Dorsolateral prefrontal cortex (tissue), 120 donors: ENCODE measurements at regions of chr1 and their contacts with region 1.

Region 1: GRCh38 chr1:48572646-48573261 is 100.8 kb upstream of the SPATA6 start:
- DNase-seq: peak; percentile 37 to 91 (median 82)
- H3K4me3 ChIP-seq: no peak overlapping the region
- H3K27ac ChIP-seq: no peak overlapping the region
- H3K27me3 ChIP-seq: no peaks in the 10 kb centered on the region
- CTCF ChIP-seq: peak; percentile 32 to 93 (median 84)

Region 2: GRCh38 chr1:48610628-48611542 is 38.1 kb after region 1 on chr1:
- intact Hi-C with region 1: no loop called
- DNase-seq: peak; percentile 4 to 64 (median 55)
- H3K4me3 ChIP-seq: peak overlapping the region in 4 of 59 donors; percentile 7 to 38 (median 17)
- H3K27ac ChIP-seq: peak overlapping the region in 56 of 59 donors; percentile 12 to 87 (median 70)
- H3K27me3 ChIP-seq: no peaks in the 10 kb centered on the region
- CTCF ChIP-seq: no peak

Region 3: GRCh38 chr1:48677306-48678287 is 104.8 kb after region 1 on chr1:
- intact Hi-C with region 1: loop called in 1 of 2 experiments (anchors 5 kb)
- DNase-seq: peak; percentile 34 to 78 (median 70)
- H3K4me3 ChIP-seq: peak overlapping the region in 1 of 59 donors; percentile 14
- H3K27ac ChIP-seq: no peak overlapping the region
- H3K27me3 ChIP-seq: no peaks in the 10 kb centered on the region
- CTCF ChIP-seq: peak; percentile 59 to 87 (median 74)

Region 4: DNA sequence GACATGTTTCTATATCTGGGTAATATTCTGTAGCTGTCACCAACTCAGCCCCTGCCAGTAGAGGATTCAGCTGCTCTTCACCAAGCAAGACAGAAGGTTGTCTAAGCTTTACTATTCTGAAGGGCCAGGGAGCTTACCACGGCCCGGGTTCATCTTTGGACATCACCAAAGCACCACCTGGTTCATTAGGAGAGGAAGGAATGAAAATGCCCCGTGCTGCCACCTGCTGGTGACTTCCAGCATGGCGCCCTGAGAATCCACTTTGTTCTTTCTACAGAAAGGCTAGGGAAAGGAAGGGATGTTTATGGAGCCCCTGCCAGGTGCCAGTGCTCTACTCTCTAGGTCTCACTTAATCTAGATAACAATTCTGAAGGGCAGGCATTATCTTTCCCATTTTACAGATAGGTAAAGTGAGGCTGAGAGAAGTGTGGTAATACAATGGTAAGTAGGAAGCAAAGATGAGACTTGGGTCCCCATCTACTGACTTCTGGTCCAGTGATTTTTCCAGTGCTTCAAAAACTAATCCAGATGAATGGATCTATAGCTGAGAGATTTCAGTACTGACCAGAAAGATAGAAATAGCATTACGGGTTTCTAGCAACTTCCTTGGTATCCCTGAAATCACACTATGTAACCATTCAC is 124.4 kb after region 1 on chr1:
- intact Hi-C with region 1: loop called (anchors 1 to 5 kb)
- DNase-seq: peak in 8 of 10 donors; percentile 33 to 84 (median 74)
- H3K4me3 ChIP-seq: no peak overlapping the region
- H3K27ac ChIP-seq: no peak overlapping the region
- H3K27me3 ChIP-seq: no peaks in the 10 kb centered on the region
- CTCF ChIP-seq: peak; percentile 82 to 98 (median 92)

Region 5: GRCh38 chr1:48817505-48818114 is 244.9 kb after region 1 on chr1:
- intact Hi-C with region 1: loop called (anchors 2 to 10 kb)
- DNase-seq: peak; percentile 11 to 73 (median 58)
- H3K4me3 ChIP-seq: no peak overlapping the region
- H3K27ac ChIP-seq: no peak overlapping the region
- H3K27me3 ChIP-seq: no peaks in the 10 kb centered on the region
- CTCF ChIP-seq: peak; percentile 24 to 89 (median 73)

Region 6: GRCh38 chr1:50332941-50333594 is 1760.3 kb after region 1 on chr1:
- intact Hi-C with region 1: loop called in 1 of 2 experiments (anchors 10 kb)
- DNase-seq: peak in 6 of 10 donors; percentile 17 to 78 (median 56)
- H3K4me3 ChIP-seq: peak overlapping the region; percentile 12 to 72 (median 55)
- H3K27ac ChIP-seq: peak overlapping the region in 55 of 59 donors; percentile 27 to 93 (median 81)
- H3K27me3 ChIP-seq: peaks cover 0 to 24% (median 0%) of the 10 kb centered on the region in 45 donors
- CTCF ChIP-seq: peak; percentile 45 to 86 (median 75)